ENCODE measurements at regions of chr9 and their contacts with region 1.

Region 1: DNA sequence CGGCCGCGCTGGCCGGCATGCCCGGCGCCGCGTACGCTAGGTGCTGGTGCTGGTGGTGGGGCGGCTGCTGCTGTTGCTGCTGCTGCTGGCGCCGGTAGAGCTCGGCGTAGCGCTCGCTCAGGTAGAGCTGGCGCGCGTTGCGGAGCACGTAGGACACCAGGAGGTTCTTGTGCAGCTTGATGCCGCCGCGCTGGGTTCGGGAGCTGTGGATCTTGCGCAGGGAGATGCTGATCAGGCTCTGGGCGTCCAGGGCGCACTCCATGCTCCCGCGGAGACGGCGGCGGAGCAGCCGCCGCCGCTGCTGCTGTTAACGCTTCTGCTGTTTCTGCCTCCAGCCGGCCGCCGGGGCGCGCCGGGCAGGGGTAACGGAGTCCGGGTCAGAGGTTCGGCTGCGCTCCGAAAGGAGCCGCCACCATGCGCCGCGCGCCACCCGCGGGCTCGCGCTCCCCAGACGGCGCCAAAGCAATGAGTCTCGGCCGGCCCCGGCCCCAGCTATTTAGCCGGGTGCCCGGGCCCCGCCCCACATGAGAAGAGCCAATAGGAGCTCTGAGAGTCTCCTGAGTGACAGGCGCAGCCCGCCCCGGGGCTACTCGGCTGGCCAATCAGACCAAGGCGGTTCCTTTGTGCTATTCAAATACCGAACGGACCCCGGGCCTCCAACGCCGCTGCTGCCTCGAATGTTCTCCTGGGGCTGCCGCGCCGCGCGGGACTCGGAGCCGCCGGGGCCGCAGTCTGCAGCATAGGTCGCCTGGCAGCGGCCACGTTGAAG is at the start of gene IER5L:
- DNase-seq: peak; percentile 89 to 97 (median 93)
- ATAC-seq: peak; percentile 94
- H3K4me3 ChIP-seq: peak within 1 kb of the TSS; percentile 86
- H3K4me3 Mint-ChIP-seq: peak within 1 kb of the TSS; percentile 90 to 96 (median 92)
- H3K27ac ChIP-seq: peak within 1 kb of the TSS; percentile 59
- H3K27ac Mint-ChIP-seq: peak within 1 kb of the TSS in 7 of 9 donors; percentile 43 to 81 (median 62)
- H3K4me1 ChIP-seq: peaks cover 0 to 4% of the 10 kb centered on the region in 2 donors
- H3K4me1 Mint-ChIP-seq: peaks cover 0 to 17% (median 5%) of the 10 kb centered on the region in 7 donors
- H3K27me3 ChIP-seq: no peaks in the 10 kb centered on the region
- H3K27me3 Mint-ChIP-seq: peaks cover 0 to 7% (median 0%) of the 10 kb centered on the region in 5 donors
- total RNA-seq, gene IER5L: 3.4 to 6.8 (median 3.8) TPM

Region 2: DNA sequence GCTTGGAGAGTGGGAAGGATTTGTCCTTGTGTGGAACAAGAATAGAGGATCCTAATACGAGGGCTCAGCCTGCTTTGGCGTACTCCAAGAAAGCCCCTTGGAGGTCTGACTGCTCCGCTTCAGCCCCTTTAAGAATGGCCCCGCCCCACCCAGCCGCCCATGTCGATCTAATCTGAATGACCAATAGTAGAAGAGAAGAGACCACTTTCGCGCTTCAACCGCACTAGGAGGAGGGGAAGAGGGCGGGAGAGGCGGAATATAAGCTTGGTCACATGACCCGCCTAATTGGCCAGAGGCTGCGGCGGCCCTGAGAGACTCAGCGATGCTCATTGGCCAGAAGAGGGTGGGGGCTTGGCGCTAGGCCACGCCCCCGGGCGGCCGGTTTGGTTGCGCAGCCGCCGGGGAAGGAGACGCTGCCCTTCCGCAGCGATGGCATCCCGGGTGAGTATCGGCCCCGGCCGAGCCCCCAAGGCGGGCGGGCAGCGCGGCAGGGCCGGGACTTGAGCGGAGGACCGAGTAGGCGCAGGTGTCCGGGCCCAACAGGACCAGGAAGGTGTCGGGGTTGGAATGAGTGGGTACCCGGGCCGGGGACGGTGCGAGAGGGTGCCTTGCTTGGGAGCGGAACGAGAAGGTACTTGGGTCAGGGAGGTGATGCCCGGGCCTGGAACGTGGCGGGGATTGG is 141.6 kb before region 1 on chr9 and contains the start of gene MIGA2:
- CTCF ChIA-PET with region 1: no interaction called
- POLR2A ChIA-PET with region 1: no interaction called
- intact Hi-C with region 1: loop called in 1 of 2 experiments (anchors 5 kb)
- DNase-seq: peak; percentile 78 to 93 (median 90)
- ATAC-seq: peak; percentile 99
- H3K4me3 ChIP-seq: peak within 1 kb of the TSS; percentile 87
- H3K4me3 Mint-ChIP-seq: peak within 1 kb of the TSS; percentile 90 to 99 (median 94)
- H3K27ac ChIP-seq: peak within 1 kb of the TSS; percentile 72
- H3K27ac Mint-ChIP-seq: peak within 1 kb of the TSS; percentile 56 to 93 (median 87)
- H3K4me1 ChIP-seq: peaks cover 13 to 17% of the 10 kb centered on the region in 2 donors
- H3K4me1 Mint-ChIP-seq: peaks cover 22 to 41% (median 37%) of the 10 kb centered on the region in 7 donors
- H3K27me3 ChIP-seq: no peaks in the 10 kb centered on the region
- H3K27me3 Mint-ChIP-seq: no peaks in the 10 kb centered on the region
- total RNA-seq, gene MIGA2: 50.0 to 73.4 (median 60.7) TPM

Region 3: DNA sequence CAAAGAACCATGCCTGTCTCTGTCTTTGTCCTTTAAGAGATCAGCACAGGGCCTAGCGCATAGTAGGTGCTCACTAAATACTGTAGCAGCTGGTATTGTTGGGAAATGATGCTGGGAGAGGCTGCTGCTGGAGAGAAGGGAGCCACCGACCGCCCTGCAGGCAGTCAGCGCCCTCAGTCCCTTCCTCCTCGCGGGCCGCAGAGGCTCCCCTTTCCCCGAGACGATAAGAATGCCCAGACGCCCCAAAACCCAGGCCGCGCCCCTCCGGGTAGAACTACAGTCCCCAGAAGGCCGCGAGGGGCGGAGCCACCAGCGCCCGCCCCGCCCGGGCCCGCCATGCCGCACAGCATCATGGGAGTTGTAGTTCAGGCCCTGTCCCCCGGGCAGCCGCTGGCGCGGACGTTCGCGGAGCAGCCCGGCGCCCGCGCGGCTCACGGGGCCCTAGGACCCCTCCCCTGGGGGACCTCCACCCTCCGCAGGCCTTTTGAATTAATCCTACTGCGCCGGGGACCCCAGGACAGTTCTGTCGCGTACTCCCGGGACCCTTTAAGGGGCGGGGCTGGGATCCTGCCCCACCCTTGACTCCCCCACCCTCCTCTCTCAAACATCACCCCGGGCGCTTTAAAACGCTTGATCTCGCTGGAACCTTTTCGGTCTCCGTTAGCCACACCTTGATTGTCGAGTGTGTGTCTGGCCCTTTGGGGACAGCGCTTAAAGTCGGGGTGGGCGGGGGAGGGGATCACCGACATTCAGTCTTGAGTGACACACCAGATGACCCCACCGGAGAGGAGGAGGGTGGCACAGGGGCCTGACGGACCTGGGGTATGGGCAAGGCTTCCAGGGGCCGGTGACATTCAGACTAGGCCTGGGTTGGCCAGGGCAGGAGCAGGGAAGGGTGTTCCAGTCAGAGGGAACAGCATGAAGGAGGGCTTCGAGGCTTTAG is 24.9 kb after region 1 on chr9:
- CTCF ChIA-PET with region 1: interaction called, 3 read pairs
- POLR2A ChIA-PET with region 1: interaction called, 9 read pairs
- intact Hi-C with region 1: loop called (anchors 1 kb)
- DNase-seq: peak; percentile 84 to 96 (median 92)
- ATAC-seq: peak; percentile 99
- H3K4me3 ChIP-seq: peak overlapping the region; percentile 77
- H3K4me3 Mint-ChIP-seq: peak overlapping the region; percentile 64 to 82 (median 74)
- H3K27ac ChIP-seq: peak overlapping the region; percentile 83
- H3K27ac Mint-ChIP-seq: peak overlapping the region in 8 of 9 donors; percentile 64 to 91 (median 84)
- H3K4me1 ChIP-seq: peaks cover 21 to 23% of the 10 kb centered on the region in 2 donors
- H3K4me1 Mint-ChIP-seq: peaks cover 13 to 26% (median 20%) of the 10 kb centered on the region in 7 donors
- H3K27me3 ChIP-seq: no peaks in the 10 kb centered on the region
- H3K27me3 Mint-ChIP-seq: peaks cover 0 to 11% (median 0%) of the 10 kb centered on the region in 5 donors

Region 4: DNA sequence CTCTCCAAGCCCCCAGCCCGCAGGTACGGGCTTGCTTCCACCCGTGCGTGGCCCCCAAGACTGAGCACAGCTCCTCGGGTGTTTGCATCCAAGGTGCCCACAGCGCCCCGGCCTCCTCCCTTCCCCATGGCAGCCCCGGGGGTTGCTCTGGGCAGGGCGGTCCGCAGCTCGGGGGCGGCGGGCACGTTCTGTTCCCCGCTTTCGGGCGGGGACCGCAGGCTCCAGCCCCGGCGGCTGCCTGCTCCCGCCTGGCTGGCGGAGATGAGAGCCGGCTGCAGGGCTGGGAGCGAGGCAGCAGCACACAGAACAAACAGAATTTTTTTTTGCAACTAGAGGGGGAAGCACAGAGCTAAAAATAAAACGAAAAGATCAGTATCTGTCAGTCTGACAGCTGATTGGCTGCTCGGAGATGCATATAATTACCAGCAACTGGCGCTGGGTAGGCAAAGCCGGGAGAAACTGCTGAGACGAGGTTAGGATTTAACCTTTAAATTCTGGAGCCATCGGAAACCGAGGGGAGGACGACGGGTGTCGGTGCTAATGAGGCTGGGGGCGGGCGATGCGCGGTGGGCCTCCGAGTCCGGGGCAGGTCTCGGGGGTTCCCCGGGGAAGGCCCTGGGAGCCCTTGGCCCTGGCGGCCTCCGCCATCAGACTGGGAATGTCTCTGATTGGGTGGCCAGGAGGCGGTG is 142.7 kb after region 1 on chr9:
- CTCF ChIA-PET with region 1: interaction called, 5 read pairs
- POLR2A ChIA-PET with region 1: interaction called, 7 read pairs
- intact Hi-C with region 1: loop called in 1 of 2 experiments (anchors 1 kb)
- DNase-seq: peak; percentile 41 to 81 (median 76)
- ATAC-seq: peak; percentile 96
- H3K4me3 ChIP-seq: peak overlapping the region; percentile 61
- H3K4me3 Mint-ChIP-seq: peak overlapping the region; percentile 74 to 94 (median 87)
- H3K27ac ChIP-seq: peak overlapping the region; percentile 63
- H3K27ac Mint-ChIP-seq: peak overlapping the region; percentile 70 to 96 (median 92)
- H3K4me1 ChIP-seq: peaks cover 12 to 17% of the 10 kb centered on the region in 2 donors
- H3K4me1 Mint-ChIP-seq: peaks cover 11 to 22% (median 13%) of the 10 kb centered on the region in 7 donors
- H3K27me3 ChIP-seq: no peaks in the 10 kb centered on the region
- H3K27me3 Mint-ChIP-seq: no peaks in the 10 kb centered on the region

Region 5: DNA sequence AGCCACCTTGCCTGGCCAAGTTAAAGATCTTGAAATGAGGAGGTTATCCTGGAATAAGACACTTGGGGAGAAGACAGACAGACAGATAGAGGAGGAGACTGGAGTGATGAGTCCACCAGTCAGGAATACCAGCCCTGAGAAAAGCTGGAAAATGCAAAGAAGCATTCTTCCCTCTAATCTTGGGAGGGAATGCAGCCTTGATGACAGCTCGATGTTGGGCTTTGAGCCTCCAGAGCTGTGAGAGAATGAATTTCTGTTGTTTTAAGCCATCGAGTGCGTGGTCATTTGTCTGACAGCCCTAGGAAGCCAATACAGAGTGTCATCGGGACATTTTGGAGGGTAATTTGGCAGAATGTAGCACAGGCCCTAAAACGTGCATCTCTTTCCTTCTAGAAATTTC is 199.2 kb after region 1 on chr9:
- CTCF ChIA-PET with region 1: no interaction called
- POLR2A ChIA-PET with region 1: no interaction called
- intact Hi-C with region 1: no loop called
- DNase-seq: no peak
- ATAC-seq: no peak
- H3K4me3 ChIP-seq: no peak overlapping the region
- H3K4me3 Mint-ChIP-seq: no peak overlapping the region
- H3K27ac ChIP-seq: no peak overlapping the region
- H3K27ac Mint-ChIP-seq: no peak overlapping the region
- H3K4me1 ChIP-seq: no peaks in the 10 kb centered on the region
- H3K4me1 Mint-ChIP-seq: peaks cover 0 to 4% (median 0%) of the 10 kb centered on the region in 7 donors
- H3K27me3 ChIP-seq: no peaks in the 10 kb centered on the region
- H3K27me3 Mint-ChIP-seq: peaks cover 0 to 30% (median 0%) of the 10 kb centered on the region in 5 donors

Region 6: GRCh38 chr9:129413537-129414376 is 235.8 kb after region 1 on chr9:
- CTCF ChIA-PET with region 1: no interaction called
- POLR2A ChIA-PET with region 1: interaction called, 6 read pairs
- intact Hi-C with region 1: loop called (anchors 1 to 2 kb)
- DNase-seq: peak; percentile 95 to 100 (median 98)
- ATAC-seq: peak; percentile 89
- H3K4me3 ChIP-seq: peak overlapping the region; percentile 76
- H3K4me3 Mint-ChIP-seq: peak overlapping the region; percentile 84 to 94 (median 90)
- H3K27ac ChIP-seq: peak overlapping the region; percentile 100
- H3K27ac Mint-ChIP-seq: peak overlapping the region; percentile 95 to 100 (median 99)
- H3K4me1 ChIP-seq: peaks cover 17 to 20% of the 10 kb centered on the region in 2 donors
- H3K4me1 Mint-ChIP-seq: peaks cover 5 to 43% (median 33%) of the 10 kb centered on the region in 7 donors
- H3K27me3 ChIP-seq: no peaks in the 10 kb centered on the region
- H3K27me3 Mint-ChIP-seq: peaks cover 0 to 2% (median 0%) of the 10 kb centered on the region in 5 donors

Region 7: DNA sequence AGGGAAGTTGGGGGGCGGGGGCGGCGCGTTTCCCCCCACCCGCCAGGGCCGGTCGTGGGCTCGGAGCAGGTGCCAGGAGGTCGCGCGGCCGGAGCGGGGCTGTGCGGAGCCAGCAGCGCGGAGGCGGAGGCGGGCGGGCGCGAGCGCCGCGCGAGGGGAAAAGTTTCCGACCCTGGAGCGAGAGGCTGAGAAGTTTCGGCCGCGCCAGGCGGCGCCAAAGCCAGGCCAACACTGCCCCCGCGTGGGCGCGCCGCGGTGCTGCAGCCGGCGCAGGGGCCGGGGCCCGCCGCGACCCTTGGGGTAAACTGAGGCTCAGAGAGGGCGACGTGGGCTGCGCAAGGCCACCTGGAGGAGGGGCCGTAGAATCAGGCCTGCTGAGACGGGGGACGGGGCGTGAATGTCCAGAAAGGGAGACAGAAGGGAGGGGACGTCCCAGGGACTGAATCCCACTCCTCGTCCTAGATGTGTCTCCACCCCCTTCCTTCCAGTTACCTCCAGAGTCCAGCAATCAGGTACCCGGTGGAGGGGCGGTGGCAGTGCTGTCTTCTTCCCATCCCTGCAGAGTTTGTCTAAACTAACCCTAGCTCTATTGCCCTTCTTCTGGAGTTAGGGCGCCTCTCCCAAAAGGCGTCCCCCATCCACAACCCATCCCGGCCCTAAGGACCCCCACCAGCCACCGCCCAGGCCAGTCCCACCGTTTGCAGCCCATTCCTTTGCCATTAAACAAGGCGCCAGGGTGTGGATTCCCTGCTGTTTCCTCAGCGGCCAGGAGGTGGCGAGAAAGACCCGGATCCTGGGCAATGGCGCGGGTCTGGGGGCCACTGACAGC is 432.7 kb after region 1 on chr9:
- CTCF ChIA-PET with region 1: interaction called, 6 read pairs
- POLR2A ChIA-PET with region 1: interaction called, 6 read pairs
- intact Hi-C with region 1: loop called (anchors 1 kb)
- DNase-seq: peak; percentile 53 to 79 (median 71)
- ATAC-seq: peak; percentile 83
- H3K4me3 ChIP-seq: peak overlapping the region; percentile 52
- H3K4me3 Mint-ChIP-seq: peak overlapping the region; percentile 57 to 96 (median 80)
- H3K27ac ChIP-seq: peak overlapping the region; percentile 17
- H3K27ac Mint-ChIP-seq: peak overlapping the region in 5 of 9 donors; percentile 62 to 85 (median 67)
- H3K4me1 ChIP-seq: peaks cover 19 to 21% of the 10 kb centered on the region in 2 donors
- H3K4me1 Mint-ChIP-seq: peaks cover 13 to 44% (median 30%) of the 10 kb centered on the region in 7 donors
- H3K27me3 ChIP-seq: no peaks in the 10 kb centered on the region
- H3K27me3 Mint-ChIP-seq: peaks cover 0 to 4% (median 0%) of the 10 kb centered on the region in 5 donors

Measured in naive thymus-derived CD4-positive, alpha-beta T cell (primary cell).